ENCODE measurements at regions of chr3 and their contacts with region 1.

Region 1: GRCh38 chr3:192090586-192090985 is 629.6 kb downstream of the PYDC2 start:
- DNase-seq: no peak
- ATAC-seq: no peak
- H3K4me3 ChIP-seq: no peak overlapping the region
- H3K27ac ChIP-seq: no peak overlapping the region
- H3K4me1 ChIP-seq: no peaks in the 10 kb centered on the region
- H3K27me3 ChIP-seq: no peaks in the 10 kb centered on the region
- CTCF ChIP-seq: no peak

Region 2: GRCh38 chr3:190242147-190242546 is 1848.4 kb before region 1 on chr3:
- intact Hi-C with region 1: loop called in 1 of 10 experiments (anchors 5 kb)
- DNase-seq: no peak
- ATAC-seq: no peak
- H3K4me3 ChIP-seq: no peak overlapping the region
- H3K27ac ChIP-seq: no peak overlapping the region
- H3K4me1 ChIP-seq: no peaks in the 10 kb centered on the region
- H3K27me3 ChIP-seq: no peaks in the 10 kb centered on the region
- CTCF ChIP-seq: no peak

Measured in heart right ventricle (tissue), 16 donors.